Activated CD8-positive, alpha-beta T cell treated with anti-CD3 and anti-CD28 coated beads for 36 hours (primary cell): ENCODE measurements at regions of chr14 and their contacts with region 1.

Region 1: GRCh38 chr14:20489093-20489994 is 16.0 kb upstream of the RNASE10 start:
- DNase-seq: no peak
- ATAC-seq: peak; percentile 64
- H3K4me3 Mint-ChIP-seq: no peak overlapping the region
- H3K27ac Mint-ChIP-seq: peak overlapping the region; percentile 66
- H3K4me1 Mint-ChIP-seq: peaks cover 55% of the 10 kb centered on the region
- H3K27me3 Mint-ChIP-seq: no peaks in the 10 kb centered on the region
- CTCF ChIP-seq: no peak

Region 2: GRCh38 chr14:20477211-20477876 is 12.0 kb before region 1 on chr14:
- CTCF ChIA-PET with region 1: interaction called, 3 read pairs
- POLR2A ChIA-PET with region 1: interaction called, 32 read pairs
- intact Hi-C with region 1: no loop called
- DNase-seq: peak; percentile 34
- ATAC-seq: peak; percentile 65
- H3K4me3 Mint-ChIP-seq: peak overlapping the region; percentile 2
- H3K27ac Mint-ChIP-seq: peak overlapping the region; percentile 94
- H3K4me1 Mint-ChIP-seq: peaks cover 60% of the 10 kb centered on the region
- H3K27me3 Mint-ChIP-seq: no peaks in the 10 kb centered on the region
- CTCF ChIP-seq: no peak